ENCODE measurements at regions of chr3 and their contacts with region 1.

Region 1: DNA sequence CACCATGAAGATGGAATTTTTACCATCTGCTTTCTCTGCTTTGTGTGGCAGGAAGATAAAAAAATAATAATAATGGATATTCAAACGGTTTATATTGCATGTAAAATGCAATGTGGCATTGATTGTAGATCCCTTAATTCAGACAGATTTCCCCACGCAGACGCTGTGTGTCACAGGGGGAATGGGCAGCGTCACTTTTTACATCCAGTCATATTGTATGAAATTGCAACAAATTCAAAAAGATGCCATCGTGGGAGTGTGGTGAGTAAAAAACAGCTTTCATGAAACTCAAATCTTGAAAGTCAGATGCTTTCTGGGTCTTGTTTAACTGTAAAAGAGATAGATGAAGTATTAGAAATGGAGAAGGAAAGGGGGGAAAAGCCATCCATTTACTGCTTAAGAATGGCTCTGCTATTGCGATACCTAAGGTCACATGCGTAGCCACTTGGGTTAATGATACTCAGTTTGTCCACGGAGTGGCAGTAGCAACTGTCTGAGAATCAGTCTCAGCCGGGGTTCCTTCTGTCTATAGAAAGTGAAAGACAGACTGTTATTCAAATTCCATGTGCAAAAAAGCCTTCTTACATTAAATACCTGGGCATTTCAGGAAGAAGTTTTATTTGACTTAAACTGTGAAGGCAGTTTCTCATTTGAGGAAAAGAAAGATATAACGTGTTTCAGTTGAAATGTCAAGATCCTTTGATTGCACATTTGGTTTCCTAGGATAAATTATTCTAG is 28.5 kb downstream of the BTD start:
- DNase-seq: no peak

Region 2: DNA sequence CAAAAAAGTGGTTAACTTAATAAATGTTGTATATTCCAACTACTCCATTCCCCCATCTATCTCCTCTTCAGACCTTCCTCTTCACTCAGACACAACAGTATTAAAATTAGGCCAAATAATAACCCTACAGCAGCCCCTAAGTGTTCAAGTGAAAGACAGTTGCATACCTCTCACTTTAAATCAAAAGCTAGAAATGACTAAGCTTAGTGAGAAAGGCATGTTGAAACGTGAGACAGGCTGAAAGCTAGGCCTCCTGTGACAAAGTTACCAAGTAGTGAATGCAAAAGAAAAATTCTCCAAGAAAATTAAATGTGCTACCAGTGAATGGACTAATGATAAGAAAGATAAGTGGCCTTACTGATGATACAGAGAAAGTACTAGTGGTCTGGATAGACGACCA is 96.0 kb after region 1 on chr3:
- intact Hi-C with region 1: no loop called
- DNase-seq: no peak

Region 3: GRCh38 chr3:15797642-15798303 is 167.7 kb after region 1 on chr3 and contains the start of gene ANKRD28:
- intact Hi-C with region 1: loop called in 1 of 2 experiments (anchors 10 kb)
- DNase-seq: no peak
- total RNA-seq, gene ANKRD28: 40.9 to 45.0 TPM

Region 4: GRCh38 chr3:15805756-15806266 is 175.8 kb after region 1 on chr3:
- intact Hi-C with region 1: loop called in 1 of 2 experiments (anchors 5 kb)
- DNase-seq: no peak